A673 (cell line): ENCODE measurements at regions of chr2 and their contacts with region 1.

Region 1: GRCh38 chr2:6896930-6897759 is 19.6 kb downstream of the RSAD2 start:
- DNase-seq: peak; percentile 47
- H3K4me3 ChIP-seq: no peak overlapping the region
- H3K27ac ChIP-seq: no peak overlapping the region
- H3K4me1 ChIP-seq: no peaks in the 10 kb centered on the region
- H3K27me3 ChIP-seq: no peaks in the 10 kb centered on the region
- CTCF ChIP-seq: peak; percentile 72

Region 2: DNA sequence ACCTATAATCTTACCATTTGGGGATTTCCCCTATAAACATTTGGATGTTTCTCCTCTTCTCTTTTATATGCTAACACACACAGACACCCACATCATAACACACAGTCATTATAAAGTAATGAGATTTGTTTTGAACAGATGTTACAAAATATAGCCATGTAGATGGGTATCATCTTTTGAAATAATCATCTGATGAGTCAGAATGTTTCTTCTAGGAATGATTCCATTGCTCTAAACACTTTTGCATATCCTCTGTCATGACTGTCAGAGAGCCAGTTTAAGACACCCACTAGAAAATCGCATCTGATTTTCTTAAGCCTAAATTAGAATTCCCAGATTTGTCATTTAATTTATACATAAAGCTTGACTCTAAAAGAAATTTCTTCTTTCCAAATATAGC is 474.0 kb before region 1 on chr2:
- CTCF ChIA-PET with region 1: no interaction called
- POLR2A ChIA-PET with region 1: no interaction called
- intact Hi-C with region 1: no loop called
- DNase-seq: peak; percentile 44
- H3K4me3 ChIP-seq: no peak overlapping the region
- H3K27ac ChIP-seq: peak overlapping the region; percentile 35
- H3K4me1 ChIP-seq: peaks cover 32% of the 10 kb centered on the region
- H3K27me3 ChIP-seq: no peaks in the 10 kb centered on the region
- CTCF ChIP-seq: no peak

Region 3: DNA sequence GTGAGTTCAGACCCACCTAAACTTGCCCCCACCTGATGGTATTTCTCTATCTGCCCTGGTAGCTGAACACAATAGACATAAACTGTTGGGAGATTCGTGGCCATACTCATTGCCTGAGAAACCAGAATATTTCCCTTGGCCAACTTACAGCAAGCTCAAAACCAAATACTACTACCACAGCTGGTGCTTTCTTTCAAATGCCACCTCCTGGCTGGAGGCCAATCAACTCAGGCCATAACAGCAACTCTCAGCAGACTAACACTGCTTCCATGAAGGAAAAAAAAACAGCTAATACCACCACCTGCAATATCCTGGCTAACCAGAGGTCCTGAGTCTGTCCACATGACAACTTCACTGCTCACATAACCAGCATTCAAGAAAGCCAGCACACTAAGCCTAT is 404.6 kb before region 1 on chr2:
- CTCF ChIA-PET with region 1: no interaction called
- POLR2A ChIA-PET with region 1: no interaction called
- intact Hi-C with region 1: no loop called
- DNase-seq: peak; percentile 7
- H3K4me3 ChIP-seq: no peak overlapping the region
- H3K27ac ChIP-seq: no peak overlapping the region
- H3K4me1 ChIP-seq: no peaks in the 10 kb centered on the region
- H3K27me3 ChIP-seq: no peaks in the 10 kb centered on the region
- CTCF ChIP-seq: no peak

Region 4: DNA sequence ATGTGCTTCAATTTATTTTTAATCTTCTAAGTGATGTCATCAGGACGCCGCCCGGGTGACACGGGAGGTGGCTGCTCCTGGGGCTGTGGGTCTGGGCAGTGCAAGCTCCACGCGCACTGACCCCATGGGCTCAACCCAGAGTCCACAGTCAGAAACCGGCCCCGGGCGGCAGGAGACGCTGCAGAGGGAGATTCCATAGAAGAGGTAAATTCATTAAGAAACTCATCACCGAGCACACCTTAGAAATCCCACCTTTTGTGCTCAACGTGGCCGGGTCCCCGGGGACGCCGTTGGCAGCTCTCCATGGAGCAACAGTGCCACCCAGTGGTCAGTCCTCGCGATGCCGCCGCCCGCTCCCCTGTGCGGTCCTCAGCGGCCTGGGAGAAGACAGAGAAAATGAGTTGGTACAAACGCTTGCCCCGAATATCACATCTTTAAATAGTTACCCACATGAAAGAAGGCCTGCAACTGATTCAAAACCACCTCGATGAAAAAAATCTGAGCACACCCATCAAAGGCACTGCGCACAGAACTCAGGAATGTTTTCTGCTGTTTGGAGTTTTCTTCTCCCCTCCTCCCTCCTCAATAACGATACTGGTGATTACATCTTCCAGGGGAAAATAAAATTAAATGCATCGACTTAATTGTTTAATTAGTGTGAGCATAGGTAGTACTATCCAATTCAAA is 124.0 kb before region 1 on chr2:
- CTCF ChIA-PET with region 1: no interaction called
- POLR2A ChIA-PET with region 1: no interaction called
- intact Hi-C with region 1: no loop called
- DNase-seq: peak; percentile 61
- H3K4me3 ChIP-seq: no peak overlapping the region
- H3K27ac ChIP-seq: no peak overlapping the region
- H3K4me1 ChIP-seq: peaks cover 11% of the 10 kb centered on the region
- H3K27me3 ChIP-seq: no peaks in the 10 kb centered on the region
- CTCF ChIP-seq: peak; percentile 97

Region 5: DNA sequence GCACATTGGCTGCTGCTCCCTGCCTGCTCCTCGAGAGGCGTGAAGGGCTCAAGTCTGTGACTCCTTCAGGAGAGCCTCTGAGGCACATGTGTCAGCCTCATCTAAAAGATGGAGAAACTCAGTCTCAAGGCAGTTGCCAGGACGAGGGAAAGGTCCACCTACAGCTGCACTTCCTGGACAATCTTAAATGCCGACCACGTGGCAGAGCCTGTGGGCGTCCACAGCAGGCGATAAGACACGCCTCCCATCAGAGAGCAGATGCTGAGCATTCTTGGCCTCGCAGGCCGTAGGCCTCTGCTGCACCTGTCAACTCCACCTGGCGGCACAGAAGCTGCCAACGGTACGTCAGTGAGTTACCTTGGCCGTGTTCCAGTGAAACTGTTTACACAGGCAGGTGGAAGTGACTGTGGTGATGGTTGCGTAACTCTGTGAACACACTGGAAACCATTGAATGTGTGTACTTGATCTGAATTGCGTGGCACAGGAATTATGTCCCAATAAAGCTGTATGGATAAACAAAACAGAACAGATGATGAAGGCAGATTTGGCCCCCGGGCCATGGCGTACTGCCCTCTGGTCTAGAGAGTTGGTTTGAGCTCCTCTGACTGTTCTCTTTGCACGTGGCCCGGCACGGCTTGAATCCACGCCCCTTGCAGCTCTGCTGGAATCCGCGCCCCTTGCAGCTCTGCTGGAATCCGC is 134.6 kb after region 1 on chr2:
- CTCF ChIA-PET with region 1: interaction called, 13 read pairs
- POLR2A ChIA-PET with region 1: no interaction called
- intact Hi-C with region 1: no loop called
- DNase-seq: peak; percentile 10
- H3K4me3 ChIP-seq: no peak overlapping the region
- H3K27ac ChIP-seq: no peak overlapping the region
- H3K4me1 ChIP-seq: no peaks in the 10 kb centered on the region
- H3K27me3 ChIP-seq: no peaks in the 10 kb centered on the region
- CTCF ChIP-seq: no peak

Region 6: GRCh38 chr2:7044261-7045250 is 147.4 kb after region 1 on chr2:
- CTCF ChIA-PET with region 1: no interaction called
- POLR2A ChIA-PET with region 1: no interaction called
- intact Hi-C with region 1: loop called (anchors 1 kb)
- DNase-seq: peak; percentile 60
- H3K4me3 ChIP-seq: no peak overlapping the region
- H3K27ac ChIP-seq: no peak overlapping the region
- H3K4me1 ChIP-seq: no peaks in the 10 kb centered on the region
- H3K27me3 ChIP-seq: no peaks in the 10 kb centered on the region
- CTCF ChIP-seq: peak; percentile 90

Region 7: DNA sequence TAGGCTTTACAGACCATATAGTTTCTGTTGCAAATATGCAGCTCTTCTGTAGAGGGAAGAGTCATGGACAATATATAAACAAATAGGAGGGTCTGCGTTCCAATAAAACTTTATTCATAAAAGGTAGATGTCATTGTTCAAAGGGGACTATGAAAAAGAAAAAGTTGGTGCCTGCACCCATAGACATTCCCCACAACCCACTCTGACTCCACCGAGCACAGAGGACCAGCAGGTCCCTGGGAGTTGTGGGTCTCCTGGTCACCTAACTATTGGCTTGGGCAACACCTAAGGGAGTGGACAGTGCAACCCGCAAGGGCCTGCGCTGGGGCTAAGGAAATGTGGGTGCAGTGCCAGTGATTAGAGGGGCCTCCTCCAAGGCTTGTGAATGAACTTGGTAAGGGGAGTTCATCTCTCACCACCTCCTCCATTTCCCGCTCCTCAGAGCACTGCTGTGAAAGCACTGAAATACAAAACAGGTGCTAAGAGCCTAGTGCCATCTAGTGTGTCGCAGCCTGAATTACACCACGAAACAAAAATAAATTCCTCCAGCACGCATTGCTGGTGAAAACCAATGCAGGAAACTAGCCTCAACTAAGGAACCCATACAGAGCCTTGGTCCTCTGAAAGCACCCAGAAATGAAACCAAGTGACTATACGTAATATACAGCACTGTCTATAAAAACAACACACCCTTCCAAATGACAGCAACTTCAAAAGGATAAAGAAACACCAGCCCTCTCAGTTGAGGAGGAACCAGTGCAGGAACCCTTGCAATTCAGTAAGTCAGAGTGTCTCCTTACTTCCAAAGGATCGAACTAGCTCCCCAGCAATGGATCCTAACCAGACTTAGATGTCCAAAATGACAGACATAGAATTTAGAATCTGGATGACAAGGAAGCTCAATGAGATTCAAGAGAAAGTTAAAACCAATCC is 186.7 kb after region 1 on chr2:
- CTCF ChIA-PET with region 1: no interaction called
- POLR2A ChIA-PET with region 1: no interaction called
- intact Hi-C with region 1: loop called (anchors 1 kb)
- DNase-seq: peak; percentile 73
- H3K4me3 ChIP-seq: no peak overlapping the region
- H3K27ac ChIP-seq: no peak overlapping the region
- H3K4me1 ChIP-seq: no peaks in the 10 kb centered on the region
- H3K27me3 ChIP-seq: no peaks in the 10 kb centered on the region
- CTCF ChIP-seq: peak; percentile 72

Region 8: DNA sequence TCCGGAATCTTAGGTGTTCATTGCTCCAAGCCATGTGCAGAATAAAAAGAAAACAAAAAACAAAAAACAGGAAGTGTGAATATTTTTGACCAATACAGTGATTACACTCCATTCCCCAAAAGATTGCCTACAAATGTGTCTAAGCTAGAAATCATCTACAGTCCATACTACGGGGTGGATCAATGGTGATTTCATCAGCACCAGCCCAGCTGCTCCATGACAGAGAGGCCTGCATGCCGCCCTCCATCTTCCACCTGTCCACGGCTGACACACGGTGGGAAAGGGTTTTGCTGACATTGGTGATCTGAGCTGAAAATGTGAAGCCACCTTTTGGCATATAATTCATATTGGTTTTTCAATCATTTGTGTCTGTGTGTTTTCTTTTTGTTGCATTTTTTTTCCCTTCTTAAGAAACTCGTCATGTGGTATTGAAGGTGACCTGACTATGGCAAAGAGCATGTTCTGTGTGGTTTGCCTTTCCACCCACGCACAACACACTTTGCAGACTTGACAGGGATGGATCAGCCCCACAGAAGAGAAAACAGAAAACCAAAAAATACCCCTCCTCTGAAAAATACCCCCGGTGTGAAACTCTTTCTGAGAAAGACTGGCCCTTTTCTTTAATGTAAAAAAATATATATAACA is 553.2 kb after region 1 on chr2:
- CTCF ChIA-PET with region 1: no interaction called
- POLR2A ChIA-PET with region 1: no interaction called
- intact Hi-C with region 1: no loop called
- DNase-seq: no peak
- H3K4me3 ChIP-seq: no peak overlapping the region
- H3K27ac ChIP-seq: no peak overlapping the region
- H3K4me1 ChIP-seq: no peaks in the 10 kb centered on the region
- H3K27me3 ChIP-seq: no peaks in the 10 kb centered on the region
- CTCF ChIP-seq: no peak